Astrocyte of the cerebellum (primary cell): ENCODE measurements at regions of chr9 and their contacts with region 1.

Region 1: GRCh38 chr9:5529683-5530221 is 19.4 kb downstream of the PDCD1LG2 start:
- DNase-seq: no peak
- H3K4me3 ChIP-seq: no peak overlapping the region
- CTCF ChIP-seq: no peak

Region 2: GRCh38 chr9:5450359-5451091 is 79.2 kb before region 1 on chr9 and contains the start of gene CD274:
- in situ Hi-C with region 1: loop called (anchors 10 kb)
- DNase-seq: no peak
- H3K4me3 ChIP-seq: peak within 1 kb of the TSS; percentile 43
- CTCF ChIP-seq: peak; percentile 71